ENCODE measurements at regions of chr7 and their contacts with region 1.

Region 1: GRCh38 chr7:99098824-99099498 is 44.9 kb downstream of the SMURF1 start:
- DNase-seq: peak; percentile 59 to 80
- H3K4me3 ChIP-seq: no peak overlapping the region
- H3K4me3 Mint-ChIP-seq: peak overlapping the region; percentile 56
- H3K27ac Mint-ChIP-seq: peak overlapping the region; percentile 79
- H3K4me1 ChIP-seq: peaks cover 27% of the 10 kb centered on the region
- H3K4me1 Mint-ChIP-seq: peaks cover 31% of the 10 kb centered on the region
- H3K27me3 ChIP-seq: no peaks in the 10 kb centered on the region
- H3K27me3 Mint-ChIP-seq: no peaks in the 10 kb centered on the region
- CTCF ChIP-seq: no peak

Region 2: GRCh38 chr7:99126921-99127553 is 28.1 kb after region 1 on chr7:
- CTCF ChIA-PET with region 1: no interaction called
- POLR2A ChIA-PET with region 1: no interaction called
- intact Hi-C with region 1: no loop called
- DNase-seq: no peak
- H3K4me3 ChIP-seq: no peak overlapping the region
- H3K4me3 Mint-ChIP-seq: no peak overlapping the region
- H3K27ac Mint-ChIP-seq: no peak overlapping the region
- H3K4me1 ChIP-seq: 0 out of 2 replicates have a peak, but pooled peaks cover 3% of the 10 kb centered on the region
- H3K4me1 Mint-ChIP-seq: peaks cover 22% of the 10 kb centered on the region
- H3K27me3 ChIP-seq: no peaks in the 10 kb centered on the region
- H3K27me3 Mint-ChIP-seq: no peaks in the 10 kb centered on the region
- CTCF ChIP-seq: no peak

Region 3: GRCh38 chr7:99210264-99210970 is 111.5 kb after region 1 on chr7:
- CTCF ChIA-PET with region 1: no interaction called
- POLR2A ChIA-PET with region 1: interaction called, 6 read pairs
- intact Hi-C with region 1: loop called (anchors 2 kb)
- DNase-seq: peak; percentile 46 to 80
- H3K4me3 ChIP-seq: no peak overlapping the region
- H3K4me3 Mint-ChIP-seq: peak overlapping the region; percentile 49
- H3K27ac Mint-ChIP-seq: peak overlapping the region; percentile 98
- H3K4me1 ChIP-seq: peaks cover 39% of the 10 kb centered on the region
- H3K4me1 Mint-ChIP-seq: peaks cover 24% of the 10 kb centered on the region
- H3K27me3 ChIP-seq: no peaks in the 10 kb centered on the region
- H3K27me3 Mint-ChIP-seq: no peaks in the 10 kb centered on the region
- CTCF ChIP-seq: no peak

Region 4: DNA sequence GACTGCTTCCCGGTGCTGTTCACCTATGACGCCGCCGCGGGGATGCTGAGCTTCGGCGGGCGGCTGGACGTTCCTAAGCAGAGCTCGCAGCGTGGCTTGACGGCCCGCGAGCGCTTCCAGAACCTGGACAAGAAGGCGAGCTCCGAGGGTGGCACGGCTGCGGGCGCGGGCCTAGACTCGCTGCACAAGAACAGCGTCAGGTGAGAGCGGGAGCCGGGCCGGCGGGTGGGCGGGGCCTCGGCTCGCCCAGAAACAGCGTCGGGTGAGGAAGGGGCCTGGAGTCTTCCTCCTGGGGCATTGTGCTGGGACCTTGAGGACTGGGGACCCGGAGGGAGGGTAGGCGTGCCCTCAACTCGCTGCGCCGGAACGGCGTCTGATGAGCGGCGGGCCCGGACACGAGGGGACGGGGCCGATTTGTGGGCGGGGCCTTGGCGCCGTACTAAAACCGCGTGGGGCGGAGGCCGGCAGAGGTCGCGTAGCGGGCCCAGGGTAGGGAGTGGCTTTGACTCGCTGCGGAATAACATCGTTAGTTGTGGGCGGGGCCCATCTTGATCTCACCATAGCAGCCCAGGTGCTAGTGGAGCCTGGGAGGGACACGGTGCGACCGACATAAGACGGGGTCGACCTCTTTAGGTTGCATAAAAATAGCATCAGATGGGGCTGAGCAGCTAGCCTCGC is 293.9 kb after region 1 on chr7:
- CTCF ChIA-PET with region 1: no interaction called
- POLR2A ChIA-PET with region 1: no interaction called
- intact Hi-C with region 1: no loop called
- DNase-seq: no peak
- H3K4me3 ChIP-seq: no peak overlapping the region
- H3K4me3 Mint-ChIP-seq: no peak overlapping the region
- H3K27ac Mint-ChIP-seq: no peak overlapping the region
- H3K4me1 ChIP-seq: no peaks in the 10 kb centered on the region
- H3K4me1 Mint-ChIP-seq: peaks cover under 1% of the 10 kb centered on the region
- H3K27me3 ChIP-seq: no peaks in the 10 kb centered on the region
- H3K27me3 Mint-ChIP-seq: no peaks in the 10 kb centered on the region
- CTCF ChIP-seq: no peak